Natural killer cell (primary cell): ENCODE measurements at regions of chr20 and their contacts with region 1.

Region 1: GRCh38 chr20:10673988-10674711 is at the start of gene JAG1:
- DNase-seq: peak; percentile 56 to 81
- ATAC-seq: peak; percentile 68 to 86 (median 75)
- H3K4me3 ChIP-seq: peak within 1 kb of the TSS; percentile 48
- H3K4me3 Mint-ChIP-seq: peak within 1 kb of the TSS; percentile 97
- H3K27ac ChIP-seq: peak within 1 kb of the TSS; percentile 80
- H3K27ac Mint-ChIP-seq: peak within 1 kb of the TSS; percentile 87 to 97
- H3K4me1 ChIP-seq: peaks cover 33% of the 10 kb centered on the region
- H3K4me1 Mint-ChIP-seq: peaks cover 23 to 40% of the 10 kb centered on the region in 2 donors
- H3K27me3 ChIP-seq: peaks cover 8% of the 10 kb centered on the region
- H3K27me3 Mint-ChIP-seq: peaks cover 22 to 23% of the 10 kb centered on the region in 2 donors
- CTCF ChIP-seq: no peak
- total RNA-seq, gene JAG1: 8.1 to 12.3 (median 8.7) TPM

Region 2: GRCh38 chr20:10434832-10435812 is 239.0 kb before region 1 on chr20 and contains the start of gene SLX4IP:
- intact Hi-C with region 1: loop called (anchors 10 kb)
- DNase-seq: peak; percentile 72 to 94
- ATAC-seq: peak; percentile 64 to 81 (median 66)
- H3K4me3 ChIP-seq: peak within 1 kb of the TSS; percentile 85
- H3K4me3 Mint-ChIP-seq: peak within 1 kb of the TSS; percentile 96
- H3K27ac ChIP-seq: peak within 1 kb of the TSS; percentile 90
- H3K27ac Mint-ChIP-seq: peak within 1 kb of the TSS; percentile 93 to 95
- H3K4me1 ChIP-seq: peaks cover 12% of the 10 kb centered on the region
- H3K4me1 Mint-ChIP-seq: peaks cover 34 to 47% of the 10 kb centered on the region in 2 donors
- H3K27me3 ChIP-seq: no peaks in the 10 kb centered on the region
- H3K27me3 Mint-ChIP-seq: no peaks in the 10 kb centered on the region
- CTCF ChIP-seq: no peak
- total RNA-seq, gene SLX4IP: 2.9 to 5.5 (median 5.2) TPM

Region 3: GRCh38 chr20:10558635-10559187 is 115.4 kb before region 1 on chr20:
- intact Hi-C with region 1: loop called (anchors 5 kb)
- DNase-seq: peak; percentile 31 to 66
- ATAC-seq: peak; percentile 84 to 99 (median 97)
- H3K4me3 ChIP-seq: no peak overlapping the region
- H3K4me3 Mint-ChIP-seq: no peak overlapping the region
- H3K27ac ChIP-seq: no peak overlapping the region
- H3K27ac Mint-ChIP-seq: peak overlapping the region; percentile 45 to 79
- H3K4me1 ChIP-seq: peaks cover 4% of the 10 kb centered on the region
- H3K4me1 Mint-ChIP-seq: peaks cover 14 to 21% of the 10 kb centered on the region in 2 donors
- H3K27me3 ChIP-seq: no peaks in the 10 kb centered on the region
- H3K27me3 Mint-ChIP-seq: no peaks in the 10 kb centered on the region
- CTCF ChIP-seq: no peak

Region 4: DNA sequence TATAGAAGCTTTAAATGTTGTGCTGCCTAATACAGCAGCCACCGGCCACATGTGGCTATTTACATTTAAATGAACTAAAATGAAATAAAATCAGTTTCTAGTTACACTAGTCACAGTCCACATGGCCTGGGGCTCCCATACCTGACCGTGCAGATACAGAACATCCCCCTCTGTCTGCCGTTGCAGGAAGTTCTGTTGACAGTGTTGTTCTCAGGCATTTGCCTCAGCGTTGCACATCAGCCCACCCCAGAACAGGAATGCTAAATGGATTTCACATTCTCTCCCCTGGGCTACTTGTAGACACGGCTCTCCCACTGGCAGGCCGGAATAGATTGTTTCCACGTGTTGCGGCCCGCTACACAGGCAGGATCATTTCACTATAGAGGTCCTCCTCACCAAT is 26.7 kb before region 1 on chr20:
- intact Hi-C with region 1: no loop called
- DNase-seq: peak in 1 of 2 donors; percentile 15
- ATAC-seq: peak; percentile 37 to 64 (median 62)
- H3K4me3 ChIP-seq: no peak overlapping the region
- H3K4me3 Mint-ChIP-seq: no peak overlapping the region
- H3K27ac ChIP-seq: no peak overlapping the region
- H3K27ac Mint-ChIP-seq: no peak overlapping the region
- H3K4me1 ChIP-seq: no peaks in the 10 kb centered on the region
- H3K4me1 Mint-ChIP-seq: peaks cover 0 to 9% of the 10 kb centered on the region in 2 donors
- H3K27me3 ChIP-seq: no peaks in the 10 kb centered on the region
- H3K27me3 Mint-ChIP-seq: no peaks in the 10 kb centered on the region
- CTCF ChIP-seq: peak; percentile 21

Region 5: DNA sequence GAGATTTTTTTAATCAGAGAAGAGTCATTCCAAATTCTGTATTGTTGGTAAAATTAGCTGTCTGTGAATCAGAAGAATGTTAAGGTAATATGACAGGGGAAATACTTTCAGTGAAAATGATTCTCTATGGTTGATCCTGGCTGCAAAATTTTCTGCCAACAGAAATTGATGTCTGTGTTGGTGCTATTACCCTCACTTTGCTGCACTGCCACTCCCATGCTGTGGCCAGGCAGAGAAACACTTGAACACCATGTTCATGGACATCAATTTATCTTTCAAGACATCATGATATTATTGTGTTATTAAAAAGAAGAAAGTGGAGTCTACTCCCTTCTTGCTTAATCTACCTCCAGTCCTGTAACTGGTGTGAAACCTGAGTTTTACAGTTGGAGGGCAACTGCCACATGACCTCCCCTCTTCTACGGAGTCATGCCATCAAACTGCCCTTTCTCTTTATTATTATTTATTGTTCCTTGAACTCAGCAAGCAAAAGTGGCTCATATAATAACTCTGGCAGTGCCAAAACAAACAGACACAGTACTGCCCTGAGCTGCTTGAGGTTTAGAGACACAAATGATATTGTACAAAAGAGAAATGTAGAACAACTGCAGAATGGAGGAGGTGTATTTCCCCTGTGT is 287.6 kb after region 1 on chr20:
- intact Hi-C with region 1: no loop called
- DNase-seq: no peak
- ATAC-seq: no peak
- H3K4me3 ChIP-seq: no peak overlapping the region
- H3K4me3 Mint-ChIP-seq: no peak overlapping the region
- H3K27ac ChIP-seq: no peak overlapping the region
- H3K27ac Mint-ChIP-seq: no peak overlapping the region
- H3K4me1 ChIP-seq: no peaks in the 10 kb centered on the region
- H3K4me1 Mint-ChIP-seq: no peaks in the 10 kb centered on the region
- H3K27me3 ChIP-seq: no peaks in the 10 kb centered on the region
- H3K27me3 Mint-ChIP-seq: peaks cover 0 to 5% of the 10 kb centered on the region in 2 donors
- CTCF ChIP-seq: no peak

Region 6: DNA sequence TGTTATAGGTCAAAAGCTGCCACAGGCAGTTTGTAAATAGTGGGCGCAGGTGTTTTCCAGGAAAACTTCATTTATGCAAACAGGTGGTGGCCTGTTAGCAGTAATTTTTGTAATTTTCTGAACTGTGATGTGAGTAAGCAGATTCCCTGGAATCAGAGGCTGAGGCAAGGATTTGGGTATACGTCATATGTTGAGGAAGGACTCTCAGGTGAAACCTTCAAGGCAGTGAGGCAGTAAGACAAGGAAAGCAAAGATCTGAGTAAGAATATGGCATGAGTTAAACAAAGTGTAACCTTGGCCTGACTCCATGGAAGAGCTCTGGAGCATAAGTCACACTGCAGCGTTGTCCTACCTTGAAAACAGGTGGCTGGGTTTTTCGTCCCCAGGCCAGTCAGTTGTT is 952.4 kb after region 1 on chr20:
- intact Hi-C with region 1: no loop called
- DNase-seq: no peak
- ATAC-seq: no peak
- H3K4me3 ChIP-seq: no peak overlapping the region
- H3K4me3 Mint-ChIP-seq: no peak overlapping the region
- H3K27ac ChIP-seq: no peak overlapping the region
- H3K27ac Mint-ChIP-seq: no peak overlapping the region
- H3K4me1 ChIP-seq: no peaks in the 10 kb centered on the region
- H3K4me1 Mint-ChIP-seq: no peaks in the 10 kb centered on the region
- H3K27me3 ChIP-seq: no peaks in the 10 kb centered on the region
- H3K27me3 Mint-ChIP-seq: no peaks in the 10 kb centered on the region
- CTCF ChIP-seq: no peak